ENCODE measurements at regions of chr6 and their contacts with region 1.

Region 1: GRCh38 chr6:37018198-37019064 is 13.0 kb downstream of the FGD2 start:
- DNase-seq: peak; percentile 95
- ATAC-seq: peak; percentile 90
- H3K4me3 Mint-ChIP-seq: no peak overlapping the region
- H3K27ac Mint-ChIP-seq: no peak overlapping the region; the same call in 1 of the 2 replicates
- H3K4me1 Mint-ChIP-seq: peaks cover 25% of the 10 kb centered on the region
- H3K27me3 Mint-ChIP-seq: no peaks in the 10 kb centered on the region
- CTCF ChIP-seq: peak; percentile 78

Region 2: GRCh38 chr6:36268478-36269275 is 749.8 kb before region 1 on chr6:
- CTCF ChIA-PET with region 1: no interaction called
- POLR2A ChIA-PET with region 1: no interaction called
- DNase-seq: no peak
- ATAC-seq: peak; percentile 36; the same call in 1 of the 2 replicates
- H3K4me3 Mint-ChIP-seq: no peak overlapping the region
- H3K27ac Mint-ChIP-seq: no peak overlapping the region
- H3K4me1 Mint-ChIP-seq: peaks cover 8% of the 10 kb centered on the region
- H3K27me3 Mint-ChIP-seq: peaks cover 3% of the 10 kb centered on the region; the same call in 1 of the 2 replicates
- CTCF ChIP-seq: no peak

Region 3: GRCh38 chr6:36765594-36766398 is 252.6 kb before region 1 on chr6:
- CTCF ChIA-PET with region 1: interaction called, 72 read pairs
- POLR2A ChIA-PET with region 1: no interaction called
- DNase-seq: peak; percentile 91
- ATAC-seq: peak; percentile 93
- H3K4me3 Mint-ChIP-seq: no peak overlapping the region
- H3K27ac Mint-ChIP-seq: no peak overlapping the region
- H3K4me1 Mint-ChIP-seq: peaks cover 17% of the 10 kb centered on the region
- H3K27me3 Mint-ChIP-seq: no peaks in the 10 kb centered on the region
- CTCF ChIP-seq: peak; percentile 91

Region 4: DNA sequence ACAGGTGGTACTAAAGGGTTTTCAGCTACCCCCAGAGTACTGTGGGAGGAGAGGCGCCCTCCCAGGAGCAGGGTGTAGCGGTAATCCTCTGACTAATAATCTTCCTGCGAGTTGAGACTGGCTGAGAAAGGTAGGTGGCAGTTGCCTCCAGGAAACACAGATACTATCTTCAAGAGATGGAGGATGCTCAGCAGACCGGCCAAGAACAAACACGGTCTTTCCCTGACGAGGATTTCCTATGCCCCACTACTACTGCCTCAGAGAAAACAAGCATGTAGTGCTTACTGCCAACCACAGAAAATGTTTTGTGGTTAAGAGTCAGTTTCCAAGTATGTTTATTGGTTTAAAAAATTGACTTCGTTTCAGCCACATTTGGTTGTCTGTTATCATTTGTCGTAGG is 105.8 kb before region 1 on chr6:
- CTCF ChIA-PET with region 1: interaction called, 65 read pairs
- POLR2A ChIA-PET with region 1: no interaction called
- DNase-seq: no peak
- ATAC-seq: no peak
- H3K4me3 Mint-ChIP-seq: no peak overlapping the region
- H3K27ac Mint-ChIP-seq: no peak overlapping the region
- H3K4me1 Mint-ChIP-seq: peaks cover 5% of the 10 kb centered on the region
- H3K27me3 Mint-ChIP-seq: no peaks in the 10 kb centered on the region
- CTCF ChIP-seq: no peak

Region 5: DNA sequence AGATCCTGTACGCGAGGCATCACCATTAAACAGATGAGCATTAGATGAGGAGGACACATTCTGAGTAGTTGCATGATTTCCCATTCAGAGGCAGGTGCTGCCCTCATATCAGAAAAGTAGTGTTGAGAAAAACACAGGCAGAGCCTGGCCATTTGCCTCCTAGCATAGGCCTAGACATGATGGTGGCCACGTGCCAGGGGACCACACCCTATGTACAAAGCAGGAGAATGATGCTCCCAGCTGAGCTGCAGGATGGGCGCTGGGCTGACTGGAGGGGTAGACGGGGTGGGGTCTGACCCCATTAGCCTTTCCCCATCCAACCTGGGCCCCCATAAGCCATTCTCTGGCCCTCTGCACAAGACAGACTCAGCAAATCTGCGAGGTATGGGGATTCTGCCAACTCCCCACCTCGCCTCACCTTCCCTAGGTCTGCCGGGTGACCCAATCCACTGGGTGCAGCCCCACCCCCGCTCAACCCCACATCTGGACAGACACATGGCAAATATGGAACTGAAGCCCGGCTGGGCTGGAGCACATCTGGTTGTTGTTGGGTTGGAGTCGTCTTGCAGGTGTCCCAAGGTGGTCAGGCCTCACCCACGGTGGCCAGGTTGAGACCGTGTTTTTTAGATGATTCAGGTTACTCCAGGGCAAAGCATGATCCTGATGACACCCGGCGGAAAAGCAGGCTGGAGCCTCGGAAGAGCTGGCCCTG is 50.0 kb before region 1 on chr6:
- CTCF ChIA-PET with region 1: interaction called, 16 read pairs
- POLR2A ChIA-PET with region 1: interaction called, 3 read pairs
- DNase-seq: no peak
- ATAC-seq: no peak
- H3K4me3 Mint-ChIP-seq: no peak overlapping the region
- H3K27ac Mint-ChIP-seq: no peak overlapping the region
- H3K4me1 Mint-ChIP-seq: peaks cover 7% of the 10 kb centered on the region
- H3K27me3 Mint-ChIP-seq: no peaks in the 10 kb centered on the region
- CTCF ChIP-seq: no peak

Region 6: DNA sequence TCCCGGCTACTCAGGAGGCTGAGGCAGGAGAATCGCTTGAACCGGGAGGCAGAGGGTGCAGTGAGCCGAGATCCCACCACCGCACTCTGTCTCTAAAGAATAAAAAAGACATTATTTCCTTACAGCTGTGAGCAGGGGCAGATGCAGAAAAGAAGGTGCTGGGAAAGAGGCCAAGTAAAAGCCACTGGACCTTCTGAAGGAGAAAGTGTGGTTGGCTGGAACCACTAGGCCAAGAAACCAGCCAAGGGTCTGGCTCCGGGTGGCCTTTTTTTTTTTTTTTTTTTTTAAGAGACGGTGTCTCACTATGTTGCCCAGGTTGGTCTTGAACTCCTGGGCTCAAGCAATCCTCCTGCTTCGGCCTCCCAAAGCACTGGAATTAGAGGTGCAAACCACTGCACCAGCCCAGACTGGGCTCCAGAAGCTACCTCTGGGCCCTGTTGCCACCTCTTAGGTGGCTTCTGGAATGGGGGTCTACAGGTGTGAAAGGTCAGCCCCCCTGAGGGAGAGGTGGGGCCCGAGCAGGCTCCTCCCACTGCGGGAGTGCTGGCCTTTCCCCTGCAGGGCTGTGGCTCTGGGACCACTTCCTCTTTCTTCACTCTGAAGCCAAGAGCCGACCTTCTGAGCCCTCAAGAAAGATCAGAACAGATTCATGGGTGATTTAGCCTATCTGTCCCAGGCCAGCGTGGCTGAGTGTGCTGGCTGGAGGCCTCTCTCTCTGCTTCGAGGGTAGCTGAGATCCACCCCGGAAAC is 13.2 kb before region 1 on chr6 and contains the start of gene FGD2:
- CTCF ChIA-PET with region 1: interaction called, 41 read pairs
- POLR2A ChIA-PET with region 1: interaction called, 5 read pairs
- DNase-seq: no peak
- ATAC-seq: peak; percentile 28; the same call in 1 of the 2 replicates
- H3K4me3 Mint-ChIP-seq: no peak within 1 kb of the TSS
- H3K27ac Mint-ChIP-seq: no peak within 1 kb of the TSS
- H3K4me1 Mint-ChIP-seq: no peaks in the 10 kb centered on the region
- H3K27me3 Mint-ChIP-seq: no peaks in the 10 kb centered on the region
- CTCF ChIP-seq: no peak
- total RNA-seq, gene FGD2: 0.31 to 0.78 TPM (median 0.44 TPM) in 3 replicates

Region 7: DNA sequence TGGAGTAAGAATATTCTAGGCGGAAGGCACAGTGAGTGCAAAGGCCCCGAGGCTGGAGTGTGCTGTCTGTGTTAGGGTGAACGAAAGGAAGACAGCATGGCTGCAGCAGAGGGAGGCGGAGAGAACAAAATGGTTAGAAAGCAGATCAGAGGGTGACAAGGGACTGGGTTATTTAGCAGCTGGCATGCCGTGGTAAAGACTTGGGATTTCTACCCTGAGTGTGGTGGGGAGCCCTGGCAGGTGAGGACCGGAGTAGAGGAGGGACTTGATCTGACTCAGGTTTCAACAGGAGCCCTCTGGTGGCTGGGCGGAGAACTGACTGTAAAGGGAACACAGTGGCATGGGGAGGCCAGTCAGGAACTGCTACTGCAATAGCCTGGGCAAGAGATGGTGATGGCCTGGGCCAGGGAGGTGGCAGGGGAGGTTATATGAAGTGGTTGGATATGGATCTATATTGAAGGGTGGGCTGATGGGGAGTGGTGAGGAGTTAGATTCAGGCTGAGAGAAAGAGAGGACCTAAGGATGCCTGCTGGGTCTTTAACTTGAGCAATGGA is 189.5 kb after region 1 on chr6:
- CTCF ChIA-PET with region 1: interaction called, 537 read pairs
- POLR2A ChIA-PET with region 1: interaction called, 4 read pairs
- DNase-seq: peak; percentile 97
- ATAC-seq: peak; percentile 94
- H3K4me3 Mint-ChIP-seq: no peak overlapping the region
- H3K27ac Mint-ChIP-seq: no peak overlapping the region
- H3K4me1 Mint-ChIP-seq: peaks cover 5% of the 10 kb centered on the region; the same call in 1 of the 2 replicates
- H3K27me3 Mint-ChIP-seq: peaks cover 3% of the 10 kb centered on the region; the same call in 1 of the 2 replicates
- CTCF ChIP-seq: peak; percentile 70

Region 8: DNA sequence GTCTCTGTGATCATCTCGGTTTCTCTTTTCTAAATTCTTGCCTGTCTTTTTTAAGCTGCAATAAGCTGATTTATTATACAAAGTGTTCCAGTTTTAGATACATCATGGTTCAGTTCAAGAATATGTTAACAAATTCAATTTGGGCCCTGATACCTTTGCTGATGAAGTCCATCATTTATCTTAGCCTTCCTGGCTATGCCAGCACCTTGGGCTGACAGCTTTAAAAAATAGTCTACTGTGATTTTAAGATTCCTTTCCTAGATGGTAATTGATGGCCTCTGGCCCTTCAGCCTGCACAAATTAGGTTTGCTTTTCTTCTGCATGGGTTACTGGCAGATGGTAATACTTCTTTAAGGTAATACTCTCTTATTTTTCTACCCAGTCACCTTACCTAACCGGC is 246.6 kb after region 1 on chr6:
- CTCF ChIA-PET with region 1: no interaction called
- POLR2A ChIA-PET with region 1: no interaction called
- DNase-seq: no peak
- ATAC-seq: no peak
- H3K4me3 Mint-ChIP-seq: no peak overlapping the region
- H3K27ac Mint-ChIP-seq: peak overlapping the region; percentile 13
- H3K4me1 Mint-ChIP-seq: peaks cover 56% of the 10 kb centered on the region
- H3K27me3 Mint-ChIP-seq: no peaks in the 10 kb centered on the region
- CTCF ChIP-seq: no peak